ENCODE measurements at regions of chr10 and their contacts with region 1.

Region 1: GRCh38 chr10:133438711-133439273 is 14.4 kb upstream of the SPRN start:
- DNase-seq: peak in 1 of 5 donors; percentile 32
- ATAC-seq: no peak
- H3K4me3 ChIP-seq: no peak overlapping the region
- H3K27ac ChIP-seq: no peak overlapping the region
- H3K4me1 ChIP-seq: peaks cover 0 to 6% (median 0%) of the 10 kb centered on the region in 12 donors
- H3K27me3 ChIP-seq: no peaks in the 10 kb centered on the region
- CTCF ChIP-seq: peak in 3 of 12 donors; percentile 7 to 18 (median 17)
- POLR2A ChIP-seq: no peak

Region 2: DNA sequence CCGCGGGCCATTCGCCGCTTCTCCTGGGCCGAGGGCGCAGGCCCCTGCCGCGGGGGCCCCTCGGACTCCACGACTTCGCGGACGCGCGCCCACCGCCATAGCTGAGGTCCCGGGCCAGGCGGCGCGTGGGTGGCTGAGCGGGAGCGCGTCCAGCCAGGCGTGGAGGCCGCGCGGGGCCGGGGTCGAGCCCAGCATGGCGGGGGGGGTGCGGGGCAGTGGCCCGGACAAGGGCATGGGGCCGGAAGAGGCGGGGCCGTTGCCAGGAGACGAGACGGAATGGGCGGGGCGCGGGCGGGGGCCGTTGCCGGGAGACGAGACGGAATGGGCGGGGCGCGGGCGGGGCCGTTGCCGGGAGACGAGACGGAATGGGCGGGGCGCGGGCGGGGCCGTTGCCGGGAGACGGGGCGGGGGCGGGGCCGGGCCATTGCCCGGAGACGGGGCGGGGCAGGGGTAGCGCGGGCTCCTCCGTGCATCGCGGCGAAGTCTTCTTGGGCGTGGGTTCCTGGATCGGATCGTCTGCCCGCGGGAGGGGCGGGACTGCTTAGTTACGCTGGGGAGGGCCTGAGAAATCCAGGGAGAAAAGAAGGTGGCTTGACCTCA is 177.0 kb before region 1 on chr10:
- intact Hi-C with region 1: no loop called
- DNase-seq: peak; percentile 88 to 95 (median 91)
- ATAC-seq: peak; percentile 62 to 88 (median 76)
- H3K4me3 ChIP-seq: peak overlapping the region; percentile 49 to 85 (median 77)
- H3K27ac ChIP-seq: peak overlapping the region; percentile 77 to 96 (median 89)
- H3K4me1 ChIP-seq: peaks cover 5 to 69% (median 37%) of the 10 kb centered on the region in 12 donors
- H3K27me3 ChIP-seq: no peaks in the 10 kb centered on the region
- CTCF ChIP-seq: no peak
- POLR2A ChIP-seq: peak in 1 of 2 donors; percentile 67

Region 3: DNA sequence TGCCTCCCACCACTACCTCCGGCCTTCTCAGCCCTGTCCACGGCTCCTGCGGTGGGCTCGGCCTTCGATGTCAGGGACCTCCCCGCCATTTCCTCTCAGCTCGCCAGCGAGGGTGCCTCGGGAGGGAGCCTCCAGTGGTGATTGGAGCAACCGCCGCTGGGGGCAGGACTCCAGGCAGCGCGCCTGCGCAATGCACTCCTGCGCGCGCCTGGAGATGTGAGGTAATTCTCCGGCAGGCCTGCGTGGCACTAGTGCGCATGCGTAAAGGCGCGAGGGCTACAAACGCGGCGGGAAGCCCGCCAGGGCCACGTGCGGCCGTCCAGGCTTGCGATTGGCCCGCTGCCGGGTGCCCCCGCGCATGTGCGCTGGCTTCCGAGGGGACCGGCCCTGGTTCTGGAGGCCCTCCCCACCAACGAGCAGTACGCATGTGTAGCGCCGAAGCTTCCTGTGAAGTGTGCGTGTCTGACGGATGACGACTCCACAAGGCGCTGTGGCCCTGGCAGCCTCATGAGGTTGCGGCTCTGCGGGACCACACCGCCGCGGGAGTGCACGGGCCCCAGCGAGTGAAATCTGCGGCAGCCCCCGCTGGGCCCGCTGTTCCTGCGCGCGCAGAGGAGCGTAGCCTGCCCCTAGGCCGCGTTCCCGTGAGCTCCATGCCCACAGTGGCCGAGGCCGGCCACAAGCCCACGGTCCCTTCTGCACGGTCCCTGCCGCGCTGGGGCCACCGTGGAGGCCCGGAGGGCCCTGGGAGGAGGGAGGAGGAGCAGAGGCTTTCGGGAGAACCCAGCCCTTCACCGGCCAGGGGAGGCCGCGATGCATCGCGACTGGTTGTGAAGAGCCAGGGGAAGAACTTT is 126.9 kb after region 1 on chr10 and contains the start of gene SYCE1:
- intact Hi-C with region 1: loop called in 1 of 10 experiments (anchors 5 kb)
- DNase-seq: peak in 1 of 5 donors; percentile 34
- ATAC-seq: no peak
- H3K4me3 ChIP-seq: no peak within 1 kb of the TSS
- H3K27ac ChIP-seq: no peak within 1 kb of the TSS
- H3K4me1 ChIP-seq: no peaks in the 10 kb centered on the region
- H3K27me3 ChIP-seq: peaks cover 0 to 30% (median 4%) of the 10 kb centered on the region in 9 donors
- CTCF ChIP-seq: no peak
- POLR2A ChIP-seq: no peak
- total RNA-seq, gene SYCE1: 0.32 to 0.39 (median 0.37) TPM in 3 of 9 donors, not detected in the others

Region 4: DNA sequence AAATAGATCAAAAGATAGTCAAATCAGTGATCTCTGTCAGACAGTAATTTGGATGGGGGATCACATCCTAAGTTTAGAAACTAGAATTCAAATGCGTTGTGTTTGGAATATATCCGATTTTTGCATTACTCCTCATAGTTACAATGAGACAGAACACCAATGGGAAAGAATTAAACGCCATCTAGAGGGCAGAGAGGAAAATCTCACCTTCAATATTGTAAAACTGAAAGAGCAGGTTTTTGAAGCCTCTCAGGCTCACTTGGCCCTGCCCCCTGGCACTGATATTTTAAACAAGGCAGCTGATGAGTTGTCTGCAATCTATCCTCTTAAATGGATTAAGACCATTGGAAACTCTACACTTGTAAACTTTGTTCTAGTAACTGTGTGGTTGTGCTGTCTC is 170.1 kb after region 1 on chr10:
- intact Hi-C with region 1: loop called in 1 of 10 experiments (anchors 5 kb)
- DNase-seq: no peak
- ATAC-seq: no peak
- H3K4me3 ChIP-seq: no peak overlapping the region
- H3K27ac ChIP-seq: no peak overlapping the region
- H3K4me1 ChIP-seq: no peaks in the 10 kb centered on the region
- H3K27me3 ChIP-seq: peaks cover 0 to 57% (median 19%) of the 10 kb centered on the region in 9 donors
- CTCF ChIP-seq: peak in 11 of 12 donors; percentile 18 to 62 (median 53)
- POLR2A ChIP-seq: no peak